ENCODE measurements at regions of chr5 and their contacts with region 1.

Region 1: DNA sequence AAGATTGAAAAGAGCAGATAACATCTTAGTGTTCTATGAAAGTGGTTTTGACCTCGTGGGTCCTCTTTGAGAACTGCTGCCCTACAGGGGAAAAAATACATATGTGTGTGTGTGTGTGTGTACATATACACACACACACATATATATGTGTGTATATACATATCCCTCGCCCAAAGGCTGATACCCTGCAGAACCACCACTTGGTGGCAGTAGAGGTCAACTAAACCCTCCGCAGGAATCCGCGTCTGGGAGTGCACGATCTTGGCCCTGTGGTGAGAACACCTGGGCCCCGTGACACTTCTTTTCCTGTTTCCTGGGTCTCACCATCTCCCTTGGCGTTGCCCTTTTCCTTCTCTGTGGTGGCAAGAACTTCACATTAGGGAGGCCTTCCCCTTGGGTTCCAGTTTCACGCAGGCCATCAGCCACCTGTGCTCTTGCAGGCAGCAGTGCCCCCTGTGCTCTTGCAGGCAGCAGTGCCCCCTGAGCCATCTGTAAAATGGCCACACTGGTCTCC is 8.2 kb downstream of the IL9 start:
- DNase-seq: peak; percentile 61
- H3K4me3 ChIP-seq: no peak overlapping the region
- H3K27ac ChIP-seq: no peak overlapping the region
- H3K4me1 ChIP-seq: no peaks in the 10 kb centered on the region
- H3K27me3 ChIP-seq: peaks cover 0 to 3% of the 10 kb centered on the region in 2 experiments
- CTCF ChIP-seq: peak; percentile 71 to 76
- POLR2A ChIP-seq: no peak

Region 2: DNA sequence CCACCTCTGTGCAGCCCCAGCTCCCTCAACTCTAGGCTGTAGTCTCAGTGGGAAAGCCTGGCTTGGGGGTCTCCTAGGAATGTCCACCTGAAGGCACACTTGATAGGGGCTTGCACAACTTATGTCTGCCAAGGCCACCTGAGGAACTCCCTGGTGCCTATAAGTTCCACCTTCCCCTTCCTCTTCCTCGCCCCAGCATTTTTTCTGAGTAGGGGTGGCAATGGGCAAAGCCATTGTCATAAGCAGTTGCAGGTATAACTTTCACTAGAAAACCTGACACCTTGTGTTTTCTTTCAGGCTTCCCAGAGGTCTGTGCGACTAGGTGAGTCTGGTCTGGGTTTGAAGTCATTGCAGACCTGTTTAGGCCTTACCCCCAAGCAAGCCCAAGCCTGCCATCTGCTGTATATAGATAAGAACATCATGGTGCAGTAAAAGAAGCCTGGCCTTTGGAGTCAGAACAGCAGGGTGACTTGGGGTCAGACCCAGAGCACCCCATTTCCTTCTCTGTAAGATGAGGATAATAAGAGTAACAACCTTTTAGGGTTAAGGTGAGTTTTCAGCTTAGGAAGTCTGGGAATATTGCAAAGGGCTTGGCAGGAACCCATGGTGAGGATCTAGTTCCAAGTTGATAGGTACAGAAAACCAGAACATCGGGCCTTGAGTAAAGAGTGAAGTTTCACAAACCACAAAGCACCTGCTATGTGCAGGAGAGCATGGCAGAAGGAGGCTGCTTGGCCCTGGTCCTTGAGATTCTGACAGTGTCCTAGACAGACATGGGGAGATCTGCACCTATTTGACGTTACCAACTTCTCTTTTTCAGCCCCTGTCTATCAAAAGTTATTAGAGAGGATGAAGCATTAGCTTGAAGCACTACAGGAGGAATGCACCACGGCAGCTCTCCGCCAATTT is 175.2 kb after region 1 on chr5:
- CTCF ChIA-PET with region 1: interaction called, 4 read pairs
- POLR2A ChIA-PET with region 1: no interaction called
- dilution Hi-C with region 1: no loop called
- intact Hi-C with region 1: loop called (anchors 1 kb)
- DNase-seq: peak; percentile 40
- H3K4me3 ChIP-seq: no peak overlapping the region
- H3K27ac ChIP-seq: no peak overlapping the region
- H3K4me1 ChIP-seq: peaks cover 15% of the 10 kb centered on the region
- H3K27me3 ChIP-seq: no peaks in the 10 kb centered on the region
- CTCF ChIP-seq: peak; percentile 42 to 54
- POLR2A ChIP-seq: no peak

Region 3: GRCh38 chr5:136174021-136174659 is 286.7 kb after region 1 on chr5:
- CTCF ChIA-PET with region 1: no interaction called
- POLR2A ChIA-PET with region 1: no interaction called
- dilution Hi-C with region 1: no loop called
- intact Hi-C with region 1: loop called (anchors 1 kb)
- DNase-seq: peak; percentile 57
- H3K4me3 ChIP-seq: no peak overlapping the region
- H3K27ac ChIP-seq: no peak overlapping the region
- H3K4me1 ChIP-seq: no peaks in the 10 kb centered on the region
- H3K27me3 ChIP-seq: no peaks in the 10 kb centered on the region
- CTCF ChIP-seq: peak; percentile 38 to 54
- POLR2A ChIP-seq: no peak

Region 4: GRCh38 chr5:136212252-136212721 is 324.9 kb after region 1 on chr5:
- CTCF ChIA-PET with region 1: interaction called, 33 read pairs
- POLR2A ChIA-PET with region 1: no interaction called
- dilution Hi-C with region 1: no loop called
- intact Hi-C with region 1: loop called (anchors 1 kb)
- DNase-seq: peak; percentile 37
- H3K4me3 ChIP-seq: no peak overlapping the region
- H3K27ac ChIP-seq: no peak overlapping the region
- H3K4me1 ChIP-seq: no peaks in the 10 kb centered on the region
- H3K27me3 ChIP-seq: peaks cover 3 to 5% of the 10 kb centered on the region in 2 experiments
- CTCF ChIP-seq: peak; percentile 85 to 94
- POLR2A ChIP-seq: no peak

Measured in endothelial cell of umbilical vein (primary cell).